Activated CD8-positive, alpha-beta T cell treated with anti-CD3 and anti-CD28 coated beads for 36 hours (primary cell): ENCODE measurements at regions of chr7 and their contacts with region 1.

Region 1: DNA sequence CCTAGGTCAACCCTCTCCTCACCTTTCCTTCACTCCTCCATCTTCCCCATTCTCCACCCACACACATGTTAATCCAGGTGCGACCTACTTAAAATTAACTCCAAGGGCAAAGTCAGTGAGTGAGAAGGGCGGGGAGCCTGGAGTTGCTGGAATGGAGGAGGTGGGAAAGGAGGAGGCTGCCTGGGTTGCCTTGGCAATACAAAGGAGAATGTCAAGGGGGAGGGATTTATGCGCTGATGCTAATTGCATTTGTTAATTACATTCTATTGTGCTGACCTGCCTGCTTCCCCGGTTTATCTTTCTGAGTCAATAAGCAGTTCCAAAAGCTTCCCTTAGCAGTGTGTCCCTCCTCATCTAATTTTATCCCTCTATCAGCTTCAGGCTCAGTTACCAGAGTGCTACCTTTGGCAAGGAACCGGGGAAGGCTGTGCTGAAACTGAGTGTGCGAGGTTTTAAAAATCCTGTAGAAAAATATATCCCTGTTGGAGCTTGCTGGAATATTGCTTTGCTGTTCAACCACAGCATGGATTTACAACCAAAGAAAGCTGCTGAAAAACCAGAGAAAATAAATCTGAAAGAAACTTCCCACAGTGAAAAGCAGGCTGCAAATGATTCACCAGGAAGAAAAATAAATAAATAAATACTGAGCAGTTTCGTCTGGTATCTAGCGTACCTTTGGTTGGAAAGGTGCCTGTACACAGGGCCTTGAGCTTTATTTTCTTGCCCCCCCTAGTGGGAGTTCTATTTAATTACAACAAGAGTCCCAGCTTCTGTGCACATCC is 113.2 kb upstream of the DGKB start:
- DNase-seq: no peak
- ATAC-seq: peak; percentile 62
- H3K4me3 Mint-ChIP-seq: no peak overlapping the region
- H3K27ac Mint-ChIP-seq: no peak overlapping the region
- H3K4me1 Mint-ChIP-seq: no peaks in the 10 kb centered on the region
- H3K27me3 Mint-ChIP-seq: no peaks in the 10 kb centered on the region
- CTCF ChIP-seq: peak; percentile 64

Region 2: GRCh38 chr7:14717816-14718215 is 297.9 kb before region 1 on chr7:
- CTCF ChIA-PET with region 1: interaction called, 7 read pairs
- POLR2A ChIA-PET with region 1: no interaction called
- intact Hi-C with region 1: loop called (anchors 5 kb)
- DNase-seq: no peak
- ATAC-seq: no peak
- H3K4me3 Mint-ChIP-seq: no peak overlapping the region
- H3K27ac Mint-ChIP-seq: no peak overlapping the region
- H3K4me1 Mint-ChIP-seq: no peaks in the 10 kb centered on the region
- H3K27me3 Mint-ChIP-seq: no peaks in the 10 kb centered on the region
- CTCF ChIP-seq: no peak

Region 3: GRCh38 chr7:15005672-15006071 is 10.1 kb before region 1 on chr7:
- CTCF ChIA-PET with region 1: interaction called, 10 read pairs
- POLR2A ChIA-PET with region 1: no interaction called
- intact Hi-C with region 1: no loop called
- DNase-seq: no peak
- ATAC-seq: no peak
- H3K4me3 Mint-ChIP-seq: no peak overlapping the region
- H3K27ac Mint-ChIP-seq: no peak overlapping the region
- H3K4me1 Mint-ChIP-seq: no peaks in the 10 kb centered on the region
- H3K27me3 Mint-ChIP-seq: no peaks in the 10 kb centered on the region
- CTCF ChIP-seq: no peak

Region 4: DNA sequence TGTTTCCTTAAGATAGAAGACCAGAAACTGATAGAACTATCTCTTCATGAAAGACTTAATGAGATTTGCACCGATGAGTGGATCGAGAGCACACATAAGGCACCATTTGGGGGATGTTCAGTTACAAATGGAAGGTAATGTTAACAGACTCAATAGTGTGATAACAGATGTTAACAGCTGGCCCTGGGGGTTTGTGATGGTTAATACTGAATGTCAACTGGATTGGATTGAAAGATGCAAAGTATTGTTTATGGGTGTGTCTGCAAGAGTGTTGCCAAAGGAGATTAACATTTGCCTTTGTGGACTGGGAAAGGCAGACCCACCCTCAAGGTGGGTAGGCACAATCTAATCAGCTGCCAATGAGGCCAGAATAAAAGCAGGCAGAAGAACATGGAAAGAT is 17.3 kb after region 1 on chr7:
- CTCF ChIA-PET with region 1: no interaction called
- POLR2A ChIA-PET with region 1: no interaction called
- intact Hi-C with region 1: no loop called
- DNase-seq: no peak
- ATAC-seq: no peak
- H3K4me3 Mint-ChIP-seq: no peak overlapping the region
- H3K27ac Mint-ChIP-seq: no peak overlapping the region
- H3K4me1 Mint-ChIP-seq: no peaks in the 10 kb centered on the region
- H3K27me3 Mint-ChIP-seq: no peaks in the 10 kb centered on the region
- CTCF ChIP-seq: no peak

Region 5: DNA sequence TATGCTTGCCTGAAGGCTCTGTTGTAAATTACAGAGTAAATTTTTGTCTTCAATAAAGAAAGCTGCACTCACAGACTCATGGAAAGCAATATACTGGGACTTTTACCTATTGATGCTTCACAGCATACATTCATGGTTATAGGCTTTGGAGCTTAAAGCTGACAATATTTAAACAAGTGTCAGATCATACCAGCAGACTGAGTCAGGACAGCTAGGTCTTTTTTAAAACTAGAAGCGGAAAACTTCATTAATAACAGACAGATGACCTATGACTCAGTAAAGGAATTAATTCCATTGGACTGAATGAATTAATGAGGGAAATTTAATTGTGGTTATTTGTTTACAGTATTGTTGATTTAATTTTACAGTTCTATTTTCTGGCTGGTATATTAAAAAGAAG is 52.6 kb after region 1 on chr7:
- CTCF ChIA-PET with region 1: no interaction called
- POLR2A ChIA-PET with region 1: no interaction called
- intact Hi-C with region 1: no loop called
- DNase-seq: no peak
- ATAC-seq: no peak
- H3K4me3 Mint-ChIP-seq: no peak overlapping the region
- H3K27ac Mint-ChIP-seq: no peak overlapping the region
- H3K4me1 Mint-ChIP-seq: no peaks in the 10 kb centered on the region
- H3K27me3 Mint-ChIP-seq: no peaks in the 10 kb centered on the region
- CTCF ChIP-seq: no peak